ENCODE measurements at regions of chr7 and their contacts with region 1.

Region 1: GRCh38 chr7:64999165-65000004 is 7.1 kb downstream of the ERV3-1 start:
- DNase-seq: peak; percentile 87
- H3K4me3 ChIP-seq: peak overlapping the region; percentile 30
- H3K27ac ChIP-seq: peak overlapping the region; percentile 96
- H3K4me1 ChIP-seq: peaks cover 37% of the 10 kb centered on the region
- CTCF ChIP-seq: no peak

Region 2: DNA sequence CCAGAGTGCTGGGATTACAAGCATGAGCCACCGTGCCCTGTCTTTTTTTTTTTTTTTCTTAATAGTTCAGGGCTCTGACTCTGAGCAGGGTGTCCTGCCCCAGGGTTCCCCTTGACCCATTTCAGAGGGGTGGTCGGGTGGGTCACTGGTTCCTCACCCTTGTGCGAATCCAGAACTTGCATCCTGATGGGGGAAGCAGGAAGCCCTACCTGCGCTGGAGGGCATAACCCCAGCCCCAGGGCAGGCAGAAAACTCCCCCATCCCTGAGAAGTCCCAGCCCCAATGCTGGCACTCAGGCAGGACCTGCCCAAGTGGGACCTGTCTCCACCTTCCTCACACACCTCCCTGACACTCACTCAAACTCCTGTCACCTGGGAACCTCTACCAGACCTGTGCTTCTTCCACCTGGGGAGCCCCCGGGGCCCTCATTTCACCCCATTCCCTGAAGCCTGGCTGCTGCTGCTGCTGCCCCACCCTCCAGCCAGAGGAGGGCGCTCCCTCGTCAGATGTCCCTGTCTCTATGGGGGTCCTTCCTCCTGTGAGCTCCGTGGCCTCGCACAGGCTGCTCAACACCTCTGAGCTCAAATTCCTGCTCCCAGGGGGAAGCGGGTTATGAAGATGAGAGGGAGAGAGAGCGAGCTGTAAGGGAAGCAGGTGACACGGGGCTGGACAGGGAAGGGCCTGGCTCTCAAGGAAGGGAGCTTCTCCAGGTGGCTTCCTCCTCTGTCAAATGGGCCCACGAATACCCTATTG is 111.5 kb before region 1 on chr7:
- CTCF ChIA-PET with region 1: no interaction called
- POLR2A ChIA-PET with region 1: no interaction called
- intact Hi-C with region 1: no loop called
- DNase-seq: peak; percentile 42
- H3K4me3 ChIP-seq: no peak overlapping the region
- H3K27ac ChIP-seq: no peak overlapping the region
- H3K4me1 ChIP-seq: no peaks in the 10 kb centered on the region
- CTCF ChIP-seq: peak; percentile 82

Region 3: DNA sequence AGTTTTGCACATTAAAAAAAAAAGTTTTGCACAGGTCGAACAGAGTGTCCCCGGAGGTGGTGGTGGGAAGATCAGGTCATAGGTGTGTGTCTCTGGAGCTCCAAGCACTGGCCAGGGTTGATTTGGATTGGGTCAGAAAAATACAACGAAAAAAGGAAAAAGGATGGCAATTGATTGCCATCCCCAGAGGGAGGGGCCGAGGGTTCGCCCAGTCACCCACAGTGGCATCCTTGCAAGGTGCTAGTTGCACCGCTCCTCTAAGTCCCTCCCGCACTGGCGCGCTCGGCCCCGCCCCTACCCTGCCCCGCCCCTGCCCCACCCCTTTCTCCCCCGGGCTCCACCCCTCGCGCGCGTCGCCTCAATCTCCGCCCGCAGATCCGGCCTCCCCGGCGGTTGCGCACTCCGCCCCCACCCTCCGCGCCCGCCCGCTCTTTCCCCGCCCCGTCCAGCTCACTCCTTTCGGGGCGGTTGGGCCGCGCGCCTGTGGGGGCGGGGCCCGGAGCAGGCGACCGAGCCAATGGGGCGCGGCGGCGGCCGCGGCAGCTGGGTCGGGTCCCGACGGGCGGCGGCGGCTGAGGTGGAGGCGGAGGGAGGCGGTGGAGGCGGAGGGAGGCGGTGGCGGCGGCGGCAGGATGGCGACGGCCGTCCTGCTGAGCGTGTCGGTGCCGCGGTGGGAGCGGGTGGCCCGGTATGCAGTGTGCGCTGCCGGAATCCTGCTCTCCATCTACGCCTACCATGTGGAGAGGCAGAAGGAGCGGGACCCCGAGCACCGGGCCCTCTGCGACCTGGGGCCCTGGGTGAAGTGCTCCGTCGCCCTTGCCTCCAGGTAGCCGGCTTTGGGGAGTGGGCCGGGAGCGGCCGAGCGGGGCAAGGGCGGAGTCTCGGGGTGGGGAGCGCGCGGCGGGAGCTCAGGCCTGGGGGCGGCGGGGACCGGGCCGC is 38.6 kb after region 1 on chr7:
- CTCF ChIA-PET with region 1: no interaction called
- POLR2A ChIA-PET with region 1: interaction called, 5 read pairs
- intact Hi-C with region 1: loop called (anchors 2 kb)
- DNase-seq: peak; percentile 94
- H3K4me3 ChIP-seq: peak overlapping the region; percentile 86
- H3K27ac ChIP-seq: peak overlapping the region; percentile 54
- H3K4me1 ChIP-seq: peaks cover 26% of the 10 kb centered on the region
- CTCF ChIP-seq: peak; percentile 59

Region 4: DNA sequence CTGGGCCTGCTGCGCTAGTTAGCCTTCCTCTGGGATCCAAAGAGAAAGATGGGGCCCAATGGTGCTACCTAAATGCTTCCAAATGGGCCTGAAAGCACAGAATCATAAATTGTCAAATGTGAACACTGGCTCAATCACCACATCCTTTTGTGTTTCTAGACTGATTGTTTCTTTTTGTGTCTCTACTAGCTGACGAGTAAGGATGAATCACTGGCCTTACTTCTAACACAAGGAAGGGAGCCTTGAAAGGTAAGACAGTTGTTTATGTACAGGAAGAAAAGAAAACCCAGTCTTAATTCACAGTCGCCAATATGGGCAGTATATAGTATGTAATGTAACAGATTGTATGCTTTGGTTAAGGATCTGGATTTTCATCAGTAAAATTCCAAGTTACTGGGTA is 463.8 kb after region 1 on chr7:
- CTCF ChIA-PET with region 1: no interaction called
- POLR2A ChIA-PET with region 1: no interaction called
- intact Hi-C with region 1: loop called (anchors 10 kb)
- DNase-seq: no peak
- H3K4me3 ChIP-seq: no peak overlapping the region
- H3K27ac ChIP-seq: no peak overlapping the region
- H3K4me1 ChIP-seq: peaks cover 5% of the 10 kb centered on the region
- CTCF ChIP-seq: no peak

Region 5: GRCh38 chr7:65750511-65751344 is 751.3 kb after region 1 on chr7:
- CTCF ChIA-PET with region 1: no interaction called
- POLR2A ChIA-PET with region 1: no interaction called
- intact Hi-C with region 1: no loop called
- DNase-seq: peak; percentile 92
- H3K4me3 ChIP-seq: peak overlapping the region; percentile 90
- H3K27ac ChIP-seq: peak overlapping the region; percentile 59
- H3K4me1 ChIP-seq: peaks cover 18% of the 10 kb centered on the region
- CTCF ChIP-seq: no peak

Measured in OCI-LY7 (cell line).